CD4-positive, alpha-beta memory T cell (primary cell): ENCODE measurements at regions of chr6 and their contacts with region 1.

Region 1: DNA sequence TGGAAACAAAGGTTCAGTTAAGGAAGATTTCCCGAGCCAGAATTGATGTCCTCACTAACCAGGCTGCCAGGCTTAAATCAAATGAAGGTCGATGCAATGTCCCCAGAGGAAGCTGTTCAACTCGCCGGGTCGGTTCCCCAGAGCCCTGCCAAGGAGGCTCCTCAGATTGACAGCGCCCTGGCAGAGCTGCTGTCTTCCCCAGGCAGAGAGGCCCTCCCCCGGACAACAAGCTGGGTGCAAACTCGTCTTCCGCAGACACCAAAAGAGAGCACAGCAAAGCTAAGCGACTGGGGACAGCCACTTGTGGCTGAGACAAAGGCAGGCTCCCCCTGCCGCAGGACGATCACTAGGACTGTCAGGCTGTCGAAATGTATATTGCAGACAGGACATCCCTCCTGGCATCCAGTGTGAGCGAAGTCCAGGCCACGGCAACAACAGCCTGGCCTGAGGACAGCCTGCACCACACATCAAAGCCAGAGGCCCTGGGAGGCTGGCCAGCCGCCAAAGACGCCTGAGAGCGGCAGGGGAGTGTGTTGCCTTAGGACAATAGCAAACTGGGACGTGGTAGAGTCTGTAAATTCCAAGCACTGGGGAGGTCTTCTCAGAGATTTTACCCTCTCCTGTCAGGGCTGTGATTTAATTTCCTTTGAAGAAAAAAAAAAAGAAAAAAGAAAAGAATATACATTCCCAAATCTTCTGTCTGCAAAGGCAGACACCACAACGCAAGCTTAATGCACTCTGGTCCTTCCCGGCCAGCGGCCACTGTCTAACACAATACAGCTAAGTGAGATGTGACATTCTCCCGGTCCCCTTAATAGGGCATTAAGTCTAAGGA is 99.1 kb downstream of the HIVEP2 start:
- DNase-seq: peak; percentile 59 to 77 (median 62)
- H3K4me3 ChIP-seq: peak overlapping the region; percentile 31 to 55
- H3K4me3 Mint-ChIP-seq: peak overlapping the region; percentile 78 to 95 (median 87)
- H3K27ac ChIP-seq: peak overlapping the region; percentile 83
- H3K27ac Mint-ChIP-seq: peak overlapping the region; percentile 89 to 99 (median 96)
- H3K4me1 ChIP-seq: peaks cover 96% of the 10 kb centered on the region
- H3K4me1 Mint-ChIP-seq: peaks cover 65 to 99% (median 85%) of the 10 kb centered on the region in 4 donors
- H3K27me3 ChIP-seq: no peaks in the 10 kb centered on the region
- H3K27me3 Mint-ChIP-seq: no peaks in the 10 kb centered on the region

Region 2: DNA sequence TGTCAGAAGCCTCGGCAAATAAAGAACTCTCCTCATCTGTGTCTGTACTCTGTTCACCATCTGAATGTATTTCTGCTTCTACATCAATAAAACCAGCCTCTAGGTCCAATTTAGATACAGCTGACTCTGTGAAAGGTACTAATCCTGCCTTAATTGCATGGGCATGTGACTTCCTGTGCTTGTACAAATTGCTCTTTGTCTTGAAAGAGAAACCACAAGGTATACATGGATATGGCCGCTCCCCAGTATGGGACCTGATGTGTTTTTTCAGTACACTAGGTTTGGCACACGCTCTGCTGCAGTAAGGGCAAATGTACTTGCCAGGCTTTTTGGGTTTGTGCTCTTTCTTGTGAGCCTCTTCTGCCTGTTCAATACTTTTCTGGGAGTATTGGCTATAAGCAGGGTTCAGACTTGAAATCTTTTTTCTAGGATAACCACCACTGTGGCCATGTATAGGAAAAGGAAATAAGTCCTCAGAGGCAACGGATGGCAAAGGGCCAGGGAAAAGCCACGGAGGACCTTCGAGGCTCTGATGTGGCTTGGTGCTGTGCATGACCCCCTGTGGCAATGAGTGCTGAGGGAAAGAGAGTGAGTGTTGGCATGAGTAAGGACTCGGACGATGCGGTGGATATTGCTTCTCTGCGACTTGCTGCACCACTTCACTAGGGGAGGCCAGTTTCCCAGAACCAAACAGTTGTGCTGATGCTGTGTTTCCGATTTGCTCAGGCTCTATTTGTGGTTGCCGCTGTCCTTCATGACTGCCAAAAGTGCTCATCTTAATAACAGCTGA is 71.8 kb before region 1 on chr6:
- CTCF ChIA-PET with region 1: no interaction called
- POLR2A ChIA-PET with region 1: interaction called, 15 read pairs
- intact Hi-C with region 1: no loop called
- DNase-seq: peak; percentile 45 to 57 (median 50)
- H3K4me3 ChIP-seq: peak overlapping the region in 1 of 2 donors; percentile 32
- H3K4me3 Mint-ChIP-seq: peak overlapping the region; percentile 57 to 88 (median 74)
- H3K27ac ChIP-seq: peak overlapping the region; percentile 53
- H3K27ac Mint-ChIP-seq: peak overlapping the region; percentile 74 to 93 (median 87)
- H3K4me1 ChIP-seq: peaks cover 38% of the 10 kb centered on the region
- H3K4me1 Mint-ChIP-seq: peaks cover 38 to 72% (median 54%) of the 10 kb centered on the region in 4 donors
- H3K27me3 ChIP-seq: no peaks in the 10 kb centered on the region
- H3K27me3 Mint-ChIP-seq: no peaks in the 10 kb centered on the region

Region 3: GRCh38 chr6:142827369-142827768 is 18.5 kb before region 1 on chr6:
- CTCF ChIA-PET with region 1: interaction called, 9 read pairs
- POLR2A ChIA-PET with region 1: interaction called, 18 read pairs
- intact Hi-C with region 1: no loop called
- DNase-seq: no peak
- H3K4me3 ChIP-seq: no peak overlapping the region
- H3K4me3 Mint-ChIP-seq: no peak overlapping the region
- H3K27ac ChIP-seq: no peak overlapping the region
- H3K27ac Mint-ChIP-seq: peak overlapping the region in 5 of 7 donors; percentile 9 to 79 (median 68)
- H3K4me1 ChIP-seq: peaks cover 50% of the 10 kb centered on the region
- H3K4me1 Mint-ChIP-seq: peaks cover 51 to 80% (median 66%) of the 10 kb centered on the region in 4 donors
- H3K27me3 ChIP-seq: no peaks in the 10 kb centered on the region
- H3K27me3 Mint-ChIP-seq: no peaks in the 10 kb centered on the region

Region 4: DNA sequence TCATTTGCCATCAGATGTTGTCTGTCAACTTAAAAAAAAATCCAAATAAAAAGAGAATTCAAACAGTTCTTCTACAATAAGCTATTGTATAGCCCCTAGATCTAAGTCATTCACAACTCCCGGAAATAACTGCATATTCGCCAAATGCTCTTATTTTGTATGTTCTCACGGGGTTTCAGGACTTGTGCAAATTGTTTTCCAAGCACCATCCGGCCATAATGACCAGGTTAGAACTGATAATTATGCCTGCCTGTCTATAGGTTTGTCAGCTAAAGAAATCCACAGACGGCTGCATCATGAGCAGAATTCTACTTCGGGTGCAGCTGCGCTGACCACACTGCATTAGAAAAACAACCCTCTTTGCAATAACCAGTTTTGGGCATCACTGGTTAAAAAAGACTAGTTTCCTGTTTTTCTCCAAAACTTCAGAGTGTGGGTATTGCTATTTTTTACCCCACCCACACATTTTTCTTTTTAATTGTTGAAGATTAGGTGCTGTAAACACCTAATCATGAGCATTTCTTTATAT is 11.5 kb after region 1 on chr6:
- CTCF ChIA-PET with region 1: interaction called, 11 read pairs
- POLR2A ChIA-PET with region 1: interaction called, 409 read pairs
- intact Hi-C with region 1: loop called (anchors 1 kb)
- DNase-seq: peak; percentile 55 to 66 (median 61)
- H3K4me3 ChIP-seq: peak overlapping the region; percentile 32 to 51
- H3K4me3 Mint-ChIP-seq: peak overlapping the region; percentile 81 to 94 (median 86)
- H3K27ac ChIP-seq: peak overlapping the region; percentile 81
- H3K27ac Mint-ChIP-seq: peak overlapping the region; percentile 91 to 98 (median 95)
- H3K4me1 ChIP-seq: peaks cover 96% of the 10 kb centered on the region
- H3K4me1 Mint-ChIP-seq: peaks cover 75 to 95% (median 86%) of the 10 kb centered on the region in 4 donors
- H3K27me3 ChIP-seq: no peaks in the 10 kb centered on the region
- H3K27me3 Mint-ChIP-seq: no peaks in the 10 kb centered on the region

Region 5: GRCh38 chr6:142902636-142903053 is 56.8 kb after region 1 on chr6:
- CTCF ChIA-PET with region 1: interaction called, 6 read pairs
- POLR2A ChIA-PET with region 1: interaction called, 68 read pairs
- intact Hi-C with region 1: loop called (anchors 5 kb)
- DNase-seq: peak; percentile 85 to 92 (median 87)
- H3K4me3 ChIP-seq: peak overlapping the region in 1 of 2 donors; percentile 25
- H3K4me3 Mint-ChIP-seq: peak overlapping the region in 7 of 8 donors; percentile 66 to 91 (median 82)
- H3K27ac ChIP-seq: peak overlapping the region; percentile 86
- H3K27ac Mint-ChIP-seq: peak overlapping the region in 3 of 7 donors; percentile 98 to 99 (median 98)
- H3K4me1 ChIP-seq: peaks cover 88% of the 10 kb centered on the region
- H3K4me1 Mint-ChIP-seq: peaks cover 10 to 54% (median 34%) of the 10 kb centered on the region in 4 donors
- H3K27me3 ChIP-seq: no peaks in the 10 kb centered on the region
- H3K27me3 Mint-ChIP-seq: no peaks in the 10 kb centered on the region